Activated CD4-positive, alpha-beta memory T cell treated with anti-CD3 and anti-CD28 coated beads, Interleukin-2, amount 10 ng/mL, durations not matched to agents 7 days and 5 days (primary cell): ENCODE measurements at regions of chr21 and their contacts with region 1.

Region 1: DNA sequence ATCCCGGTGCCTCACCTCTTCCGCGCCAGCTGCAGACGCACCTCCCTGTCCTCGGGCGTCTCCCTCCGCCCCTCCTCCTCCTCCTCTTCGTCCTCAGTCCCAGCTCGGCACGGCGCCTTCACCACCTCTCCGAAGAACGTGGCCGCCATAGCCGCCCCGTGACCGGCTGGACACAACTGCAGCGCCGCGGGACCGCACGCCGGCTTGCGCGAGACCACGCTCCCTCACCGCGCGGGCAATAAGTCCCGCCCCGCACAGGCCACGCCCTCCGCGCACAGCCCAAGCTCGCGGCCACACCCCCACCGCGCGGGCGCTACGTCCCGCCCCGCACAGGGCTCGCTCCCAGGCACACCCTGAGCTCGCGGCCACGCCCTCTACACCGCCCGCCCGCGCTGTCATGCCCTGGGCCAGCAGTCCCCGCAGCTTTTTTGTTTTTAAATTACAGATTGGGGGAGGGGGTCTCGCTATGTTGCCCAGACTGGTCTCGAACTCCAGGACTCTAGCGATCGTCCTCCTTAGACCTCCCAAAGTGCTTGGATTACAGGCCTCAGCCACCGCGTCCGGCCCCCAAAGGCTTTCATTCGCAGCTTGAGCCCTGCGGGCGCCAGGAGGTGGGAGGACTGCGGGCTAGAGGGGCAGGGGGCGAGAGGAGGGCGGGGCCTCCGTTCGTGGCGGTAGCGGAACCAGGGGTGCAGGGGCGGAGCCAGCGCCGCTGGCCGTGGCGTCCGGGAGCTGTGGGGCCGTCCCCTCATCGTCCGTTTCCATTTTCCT is at the start of gene PSMG1:
- DNase-seq: peak; percentile 95
- H3K4me3 Mint-ChIP-seq: peak within 1 kb of the TSS; percentile 97
- H3K27ac Mint-ChIP-seq: peak within 1 kb of the TSS; percentile 92
- H3K4me1 Mint-ChIP-seq: peaks cover 41% of the 10 kb centered on the region
- H3K27me3 Mint-ChIP-seq: no peaks in the 10 kb centered on the region
- total RNA-seq, gene PSMG1: 59.6 to 66.2 TPM

Region 2: GRCh38 chr21:39197448-39198233 is 14.2 kb after region 1 on chr21:
- CTCF ChIA-PET with region 1: interaction called, 3 read pairs
- POLR2A ChIA-PET with region 1: interaction called, 22 read pairs
- DNase-seq: no peak
- H3K4me3 Mint-ChIP-seq: no peak overlapping the region
- H3K27ac Mint-ChIP-seq: no peak overlapping the region
- H3K4me1 Mint-ChIP-seq: peaks cover 24% of the 10 kb centered on the region
- H3K27me3 Mint-ChIP-seq: no peaks in the 10 kb centered on the region

Region 3: DNA sequence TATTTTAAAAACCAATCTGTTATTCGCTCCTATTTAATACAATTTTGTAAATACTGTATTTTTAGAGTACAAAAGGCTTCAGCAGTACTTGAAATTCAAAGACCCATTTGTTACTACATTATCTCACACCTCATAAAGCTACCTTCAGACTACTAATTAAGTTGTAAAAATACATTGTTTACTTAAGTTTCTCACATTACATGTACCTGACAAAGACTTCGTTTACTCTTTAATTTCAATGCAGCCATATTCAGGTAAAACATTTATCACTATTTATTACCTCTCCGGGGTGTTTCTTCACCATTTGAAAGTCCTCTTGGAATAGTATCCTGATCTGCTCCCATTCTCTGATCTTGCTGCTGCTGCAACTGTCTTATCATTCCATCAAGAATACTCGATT is 74.8 kb after region 1 on chr21:
- CTCF ChIA-PET with region 1: no interaction called
- POLR2A ChIA-PET with region 1: no interaction called
- DNase-seq: no peak
- H3K4me3 Mint-ChIP-seq: no peak overlapping the region
- H3K27ac Mint-ChIP-seq: no peak overlapping the region
- H3K4me1 Mint-ChIP-seq: no peaks in the 10 kb centered on the region
- H3K27me3 Mint-ChIP-seq: no peaks in the 10 kb centered on the region

Region 4: GRCh38 chr21:39349211-39350093 is 166.0 kb after region 1 on chr21:
- CTCF ChIA-PET with region 1: interaction called, 7 read pairs
- POLR2A ChIA-PET with region 1: interaction called, 50 read pairs
- DNase-seq: peak; percentile 98
- H3K4me3 Mint-ChIP-seq: peak overlapping the region; percentile 98
- H3K27ac Mint-ChIP-seq: peak overlapping the region; percentile 99
- H3K4me1 Mint-ChIP-seq: peaks cover 37% of the 10 kb centered on the region
- H3K27me3 Mint-ChIP-seq: peaks cover 6% of the 10 kb centered on the region

Region 5: DNA sequence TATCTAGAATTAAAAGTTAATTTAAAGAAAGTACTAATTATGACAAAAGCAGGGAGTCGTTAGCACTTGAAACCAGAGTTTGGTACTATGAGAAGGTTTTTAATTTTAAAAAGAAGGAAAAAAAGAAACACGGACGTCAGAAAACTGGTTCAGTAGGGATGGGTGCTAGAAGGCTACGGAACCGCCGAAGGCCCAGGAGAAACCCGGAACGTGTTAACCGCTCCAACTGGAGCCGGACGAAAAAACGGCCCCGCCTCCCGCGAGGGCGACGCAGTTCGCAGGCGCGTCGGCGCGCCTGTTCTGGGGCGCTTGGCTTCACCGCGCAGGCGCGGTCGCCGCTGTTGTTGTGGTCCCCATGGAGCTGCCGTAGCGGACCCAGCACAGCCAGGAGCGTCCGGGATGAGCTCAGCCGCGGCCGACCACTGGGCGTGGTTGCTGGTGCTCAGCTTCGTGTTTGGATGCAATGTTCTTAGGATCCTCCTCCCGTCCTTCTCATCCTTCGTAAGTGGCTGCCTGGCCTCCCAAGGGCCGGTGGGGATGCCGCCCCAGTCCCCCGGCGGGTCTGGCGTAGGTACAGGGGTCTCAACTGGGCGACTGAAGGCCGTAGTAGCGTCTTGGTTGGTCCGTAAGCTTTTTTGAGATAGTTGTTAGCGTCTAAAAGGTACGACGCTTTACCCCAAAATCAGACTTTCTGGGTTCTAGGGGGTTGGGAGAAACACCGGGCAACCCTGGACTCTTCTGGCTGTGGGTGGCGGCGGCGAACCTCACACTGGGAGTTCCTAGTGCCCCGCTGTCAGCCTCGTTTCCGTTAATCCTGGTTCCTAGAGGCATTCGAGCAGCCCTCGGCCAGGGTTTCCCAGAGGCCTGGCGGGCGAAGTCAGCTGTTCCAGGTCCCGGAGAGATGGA is 196.8 kb after region 1 on chr21:
- CTCF ChIA-PET with region 1: interaction called, 3 read pairs
- POLR2A ChIA-PET with region 1: interaction called, 42 read pairs
- DNase-seq: peak; percentile 94
- H3K4me3 Mint-ChIP-seq: peak overlapping the region; percentile 94
- H3K27ac Mint-ChIP-seq: peak overlapping the region; percentile 83
- H3K4me1 Mint-ChIP-seq: peaks cover 33% of the 10 kb centered on the region
- H3K27me3 Mint-ChIP-seq: peaks cover 2% of the 10 kb centered on the region

Region 6: DNA sequence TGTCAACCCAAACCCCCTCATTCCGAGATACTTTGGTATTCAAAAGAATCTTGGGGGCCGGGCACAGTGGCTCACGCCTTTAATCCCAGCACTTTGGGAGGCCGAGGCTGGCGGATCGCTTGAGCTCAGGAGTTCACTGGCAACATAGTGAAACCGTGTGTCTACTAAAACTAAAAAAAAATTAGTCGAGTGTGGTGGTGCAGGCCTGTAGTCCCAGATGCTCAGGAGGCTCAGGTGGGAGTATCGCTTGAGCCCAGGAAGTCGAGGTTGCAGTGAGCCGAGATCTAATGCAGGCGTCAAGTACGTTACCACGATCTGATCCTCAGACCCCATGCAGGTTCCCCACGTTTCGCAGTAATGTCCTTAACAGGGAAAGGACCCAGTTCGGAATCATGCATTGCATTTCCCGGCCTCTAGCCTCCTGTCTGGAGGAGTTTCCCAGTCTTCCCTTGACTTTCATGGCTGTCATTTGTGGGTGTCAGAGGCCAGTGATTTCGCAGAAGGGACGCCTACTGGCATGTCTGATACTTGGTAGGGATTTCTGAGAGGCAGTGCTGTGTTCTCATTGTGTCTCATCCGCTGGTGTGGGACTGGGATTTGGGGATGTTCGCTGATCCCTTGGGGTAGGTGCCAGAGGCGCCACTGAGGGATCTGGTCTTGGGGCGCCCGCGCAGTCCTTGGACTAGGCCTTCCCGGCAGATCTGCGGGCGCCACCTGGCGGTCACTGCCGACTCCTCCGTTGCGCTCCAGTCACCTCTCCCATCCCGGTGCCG is 204.8 kb after region 1 on chr21:
- CTCF ChIA-PET with region 1: interaction called, 12 read pairs
- POLR2A ChIA-PET with region 1: interaction called, 42 read pairs
- DNase-seq: peak; percentile 88
- H3K4me3 Mint-ChIP-seq: peak overlapping the region; percentile 83
- H3K27ac Mint-ChIP-seq: peak overlapping the region; percentile 82
- H3K4me1 Mint-ChIP-seq: peaks cover 45% of the 10 kb centered on the region
- H3K27me3 Mint-ChIP-seq: no peaks in the 10 kb centered on the region